CD14-positive monocyte (primary cell): ENCODE measurements at regions of chr21 and their contacts with region 1.

Region 1: DNA sequence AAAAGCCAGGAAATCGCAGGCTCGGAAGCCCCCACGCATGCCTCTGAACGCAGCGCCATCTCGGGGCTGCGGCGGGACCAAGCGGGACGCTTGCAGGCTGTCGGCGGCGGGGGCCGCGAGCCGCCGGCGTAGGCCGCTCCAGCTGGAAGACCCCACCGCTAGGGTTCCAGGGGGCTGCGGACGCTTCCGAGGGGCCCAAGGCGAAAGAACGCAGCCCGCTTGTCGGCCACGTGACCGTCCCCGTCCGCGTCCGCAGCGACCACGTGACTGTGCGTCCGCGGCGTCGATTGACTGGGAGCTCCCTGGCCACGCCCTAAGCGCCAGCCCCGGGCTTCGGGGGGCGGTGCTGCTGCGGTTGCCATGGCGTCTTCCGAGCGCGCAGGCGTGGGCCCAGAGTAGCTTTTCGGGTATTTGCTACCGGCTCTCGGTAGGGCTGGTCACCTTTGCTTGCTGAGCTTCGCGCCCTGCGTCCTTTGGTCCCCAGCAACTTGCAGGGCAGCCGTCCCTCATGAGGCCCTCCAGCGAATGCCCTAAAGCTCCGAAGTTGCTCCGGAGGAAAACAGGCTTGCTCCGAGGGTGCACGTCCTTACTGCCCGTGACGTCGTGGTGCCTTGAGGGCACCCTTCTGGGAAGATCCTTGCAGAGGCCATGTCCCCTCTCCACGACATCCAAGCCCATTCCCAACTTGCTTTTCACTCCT is 197.2 kb downstream of the DYRK1A start:
- DNase-seq: peak; percentile 90 to 92 (median 92)
- H3K4me3 ChIP-seq: peak overlapping the region; percentile 63 to 78 (median 77)
- H3K4me3 Mint-ChIP-seq: peak overlapping the region; percentile 95 to 96
- H3K27ac ChIP-seq: peak overlapping the region; percentile 93 to 96
- H3K27ac Mint-ChIP-seq: peak overlapping the region; percentile 97 to 100 (median 99)
- H3K4me1 ChIP-seq: peaks cover 25 to 31% of the 10 kb centered on the region in 2 donors
- H3K4me1 Mint-ChIP-seq: peaks cover 24% of the 10 kb centered on the region
- H3K27me3 ChIP-seq: no peaks in the 10 kb centered on the region
- H3K27me3 Mint-ChIP-seq: peaks cover 0 to 6% (median 0%) of the 10 kb centered on the region in 3 donors
- CTCF ChIP-seq: peak; percentile 15

Region 2: GRCh38 chr21:37463083-37463801 is 100.5 kb before region 1 on chr21:
- intact Hi-C with region 1: loop called in 1 of 2 experiments (anchors 10 kb)
- DNase-seq: peak; percentile 54 to 56 (median 55)
- H3K4me3 ChIP-seq: peak overlapping the region in 1 of 3 experiments; percentile 43
- H3K4me3 Mint-ChIP-seq: peak overlapping the region in 1 of 2 donors; percentile 56
- H3K27ac ChIP-seq: peak overlapping the region in 1 of 2 donors; percentile 73
- H3K27ac Mint-ChIP-seq: peak overlapping the region; percentile 6 to 84 (median 76)
- H3K4me1 ChIP-seq: peaks cover 6 to 10% of the 10 kb centered on the region in 2 donors
- H3K4me1 Mint-ChIP-seq: peaks cover 37% of the 10 kb centered on the region
- H3K27me3 ChIP-seq: no peaks in the 10 kb centered on the region
- H3K27me3 Mint-ChIP-seq: peaks cover 0 to 2% (median 0%) of the 10 kb centered on the region in 3 donors
- CTCF ChIP-seq: peak; percentile 56

Region 3: GRCh38 chr21:37642493-37642892 is 78.7 kb after region 1 on chr21:
- intact Hi-C with region 1: no loop called
- DNase-seq: no peak
- H3K4me3 ChIP-seq: no peak overlapping the region
- H3K4me3 Mint-ChIP-seq: no peak overlapping the region
- H3K27ac ChIP-seq: no peak overlapping the region
- H3K27ac Mint-ChIP-seq: no peak overlapping the region
- H3K4me1 ChIP-seq: no peaks in the 10 kb centered on the region
- H3K4me1 Mint-ChIP-seq: no peaks in the 10 kb centered on the region
- H3K27me3 ChIP-seq: peaks cover 2 to 9% of the 10 kb centered on the region in 2 donors
- H3K27me3 Mint-ChIP-seq: peaks cover 11 to 18% (median 12%) of the 10 kb centered on the region in 3 donors
- CTCF ChIP-seq: no peak

Region 4: DNA sequence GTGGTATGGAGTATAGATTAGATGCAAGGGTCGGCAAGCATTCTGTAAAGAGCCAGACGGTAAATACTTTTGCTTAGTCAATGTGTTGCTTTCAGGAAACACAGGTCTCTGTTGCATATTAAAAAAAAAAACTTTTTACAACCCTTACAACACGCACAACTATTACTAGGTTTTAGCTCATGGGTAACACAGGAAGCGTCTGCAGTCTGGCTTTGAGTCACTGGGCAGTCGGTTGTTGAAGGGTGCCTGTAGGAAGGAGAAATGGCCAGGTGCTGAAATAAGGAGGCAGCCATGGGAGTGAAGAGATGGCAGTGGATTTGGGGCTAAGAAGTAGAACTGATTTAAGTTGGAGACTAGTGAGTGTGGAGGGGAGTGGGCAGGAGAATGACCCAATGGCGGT is 160.4 kb after region 1 on chr21:
- intact Hi-C with region 1: no loop called
- DNase-seq: no peak
- H3K4me3 ChIP-seq: no peak overlapping the region
- H3K4me3 Mint-ChIP-seq: no peak overlapping the region
- H3K27ac ChIP-seq: no peak overlapping the region
- H3K27ac Mint-ChIP-seq: no peak overlapping the region
- H3K4me1 ChIP-seq: no peaks in the 10 kb centered on the region
- H3K4me1 Mint-ChIP-seq: no peaks in the 10 kb centered on the region
- H3K27me3 ChIP-seq: peaks cover 0 to 2% of the 10 kb centered on the region in 2 donors
- H3K27me3 Mint-ChIP-seq: peaks cover 2 to 12% (median 8%) of the 10 kb centered on the region in 3 donors
- CTCF ChIP-seq: no peak